Activated CD8-positive, alpha-beta T cell treated with anti-CD3 and anti-CD28 coated beads, Interleukin-2, amount 10 ng/mL, durations not matched to agents 7 days and 5 days (primary cell): ENCODE measurements at regions of chr1 and their contacts with region 1.

Region 1: DNA sequence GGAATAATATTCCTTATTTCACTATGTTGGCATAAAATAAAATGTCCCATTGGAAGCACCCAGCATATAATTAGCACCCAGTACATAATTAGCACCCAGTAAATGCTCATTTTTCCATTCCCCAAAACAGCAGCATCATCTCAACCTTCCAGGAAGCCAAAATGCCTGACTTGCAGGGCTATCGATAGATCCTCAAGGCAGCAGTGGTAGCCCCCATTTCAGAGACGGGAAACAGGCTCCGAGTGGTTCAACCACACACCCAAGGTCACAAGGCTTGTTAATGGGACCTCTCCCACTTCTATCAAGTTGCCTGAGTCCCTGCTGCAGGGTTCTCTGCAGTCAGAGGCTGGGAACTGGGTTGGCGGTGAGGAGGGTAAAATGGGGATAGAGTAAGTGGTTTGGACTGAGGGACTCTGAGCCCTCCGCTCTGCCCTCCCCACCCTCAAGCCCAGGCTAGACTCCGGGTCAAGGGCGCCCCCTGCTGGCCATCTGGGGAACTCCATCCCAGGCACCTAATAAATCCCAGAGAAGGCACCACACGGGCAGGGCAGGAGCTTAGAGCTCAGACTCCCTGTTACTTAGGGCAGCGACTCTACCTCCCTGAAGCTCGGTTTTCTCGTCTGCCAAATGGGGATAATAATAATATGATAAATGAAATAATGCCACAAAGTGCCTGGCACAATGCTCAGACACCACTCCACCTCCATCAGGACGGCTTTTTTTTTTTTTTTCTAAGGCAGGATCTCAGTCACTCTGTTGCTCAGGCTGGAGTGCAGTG is 21.9 kb upstream of the LAPTM5 start:
- DNase-seq: peak; percentile 94
- ATAC-seq: peak; percentile 95
- H3K4me3 Mint-ChIP-seq: no peak overlapping the region
- H3K27ac Mint-ChIP-seq: no peak overlapping the region
- H3K4me1 Mint-ChIP-seq: peaks cover 18% of the 10 kb centered on the region
- H3K27me3 Mint-ChIP-seq: no peaks in the 10 kb centered on the region

Region 2: GRCh38 chr1:30569384-30569783 is 210.1 kb before region 1 on chr1:
- CTCF ChIA-PET with region 1: no interaction called
- POLR2A ChIA-PET with region 1: no interaction called
- DNase-seq: no peak
- ATAC-seq: no peak
- H3K4me3 Mint-ChIP-seq: no peak overlapping the region
- H3K27ac Mint-ChIP-seq: no peak overlapping the region
- H3K4me1 Mint-ChIP-seq: no peaks in the 10 kb centered on the region
- H3K27me3 Mint-ChIP-seq: peaks cover 4% of the 10 kb centered on the region

Region 3: DNA sequence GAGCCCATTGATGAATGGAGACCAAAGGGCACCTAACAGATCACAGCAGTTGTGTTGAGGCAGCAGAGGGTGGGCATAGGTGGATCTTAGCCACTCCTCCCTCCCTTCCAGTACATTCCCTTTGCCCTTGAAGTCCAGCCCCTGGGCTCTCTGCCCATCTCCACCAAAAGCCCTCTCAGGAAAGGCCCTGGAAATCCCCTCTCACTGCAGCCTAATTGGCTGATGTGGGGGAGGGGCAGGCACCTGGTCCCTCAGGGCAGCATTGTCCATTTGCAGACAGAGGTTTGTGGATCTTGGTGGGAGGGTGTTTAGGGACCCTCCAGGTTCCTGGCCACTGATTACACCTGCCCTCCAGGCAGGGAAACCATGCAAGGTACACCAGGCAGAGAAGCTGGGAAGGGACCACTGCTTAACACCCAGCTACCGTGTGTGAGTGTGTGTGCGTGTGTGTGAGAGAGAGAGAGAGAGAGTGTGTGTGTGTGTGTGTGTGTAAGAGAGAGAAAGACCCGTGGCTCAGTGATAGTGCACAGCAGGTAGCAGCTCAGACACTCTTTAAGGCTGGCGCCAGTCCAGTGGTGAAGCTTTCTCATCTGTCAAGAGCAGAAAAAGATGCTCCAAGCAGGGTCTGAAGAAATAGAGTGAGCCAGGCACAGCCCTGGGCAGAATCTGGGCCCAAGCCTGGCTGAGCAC is 127.2 kb before region 1 on chr1:
- CTCF ChIA-PET with region 1: no interaction called
- POLR2A ChIA-PET with region 1: no interaction called
- DNase-seq: no peak
- ATAC-seq: no peak
- H3K4me3 Mint-ChIP-seq: no peak overlapping the region
- H3K27ac Mint-ChIP-seq: no peak overlapping the region
- H3K4me1 Mint-ChIP-seq: no peaks in the 10 kb centered on the region
- H3K27me3 Mint-ChIP-seq: peaks cover 11% of the 10 kb centered on the region

Region 4: DNA sequence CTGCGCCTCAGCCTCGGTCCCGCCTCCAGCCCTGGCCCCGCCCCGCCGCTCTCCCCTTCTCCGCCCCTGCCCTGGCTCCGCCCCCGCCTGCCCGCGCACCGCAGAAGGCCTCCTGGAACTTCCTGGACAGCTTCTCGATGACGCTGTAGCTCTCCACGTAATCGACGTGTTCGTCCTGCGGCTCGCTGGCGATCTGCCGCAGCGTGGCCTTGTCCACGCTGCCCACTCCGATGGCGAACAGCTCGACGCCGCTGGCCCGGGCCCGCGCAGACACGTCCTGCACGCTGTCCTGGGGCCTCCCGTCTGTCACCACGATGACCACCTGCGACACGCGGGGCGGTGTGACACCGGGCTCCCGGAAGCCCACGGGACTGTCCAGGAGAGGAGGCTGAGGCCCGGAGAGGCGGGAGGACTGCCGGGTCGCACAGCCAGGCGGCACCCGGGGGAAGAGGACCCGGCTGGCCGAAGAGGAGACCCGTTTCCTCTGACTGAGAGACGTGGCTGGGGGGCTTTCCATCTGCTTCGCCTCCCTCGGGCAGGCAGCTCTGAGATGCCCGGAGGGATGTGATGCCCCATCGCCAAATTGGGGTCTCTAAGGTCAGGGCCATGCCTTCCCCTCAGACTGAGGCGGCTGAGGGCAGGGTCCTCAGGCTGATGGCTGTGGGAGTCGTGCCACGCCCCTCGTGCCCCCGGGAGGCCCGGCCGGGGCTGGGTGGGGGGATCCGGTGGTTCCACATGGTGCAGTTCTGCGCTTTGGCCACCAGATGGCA is 60.7 kb before region 1 on chr1:
- CTCF ChIA-PET with region 1: interaction called, 532 read pairs
- POLR2A ChIA-PET with region 1: interaction called, 29 read pairs
- DNase-seq: peak; percentile 86
- ATAC-seq: peak; percentile 74
- H3K4me3 Mint-ChIP-seq: peak overlapping the region; percentile 84
- H3K27ac Mint-ChIP-seq: peak overlapping the region; percentile 97
- H3K4me1 Mint-ChIP-seq: peaks cover 24% of the 10 kb centered on the region
- H3K27me3 Mint-ChIP-seq: no peaks in the 10 kb centered on the region

Region 5: DNA sequence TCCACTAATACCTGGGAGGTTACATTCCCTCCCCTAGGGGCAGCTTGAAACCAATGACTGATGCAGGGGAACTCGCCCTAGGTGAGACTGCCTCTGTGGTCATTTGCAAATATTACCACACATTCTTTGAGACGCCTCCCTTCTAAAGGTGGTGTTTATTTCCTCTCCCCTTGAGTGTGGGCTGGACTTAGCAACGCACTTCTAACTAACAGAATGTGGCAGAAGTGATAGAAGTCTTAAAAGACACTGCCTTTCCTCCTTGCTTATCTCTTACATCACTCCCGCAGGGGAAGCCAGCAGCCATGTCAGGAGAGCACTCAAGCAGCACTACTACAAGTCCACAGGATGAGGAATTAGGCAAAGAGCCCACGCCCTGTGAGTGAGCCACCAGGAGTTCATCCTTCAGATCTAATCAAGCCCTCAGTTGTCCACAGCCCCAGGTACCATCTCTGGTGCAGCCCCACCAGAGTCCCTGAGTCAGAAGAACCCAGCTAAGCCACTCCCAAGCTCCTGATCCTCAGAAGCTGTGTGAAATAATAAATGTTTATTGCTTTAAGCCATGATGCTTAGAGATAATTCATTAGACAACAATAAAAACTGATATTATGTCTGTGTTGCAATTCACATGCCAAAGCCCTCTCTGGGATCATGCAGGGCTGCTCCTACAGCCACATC is 41.3 kb before region 1 on chr1:
- CTCF ChIA-PET with region 1: interaction called, 53 read pairs
- POLR2A ChIA-PET with region 1: no interaction called
- DNase-seq: no peak
- ATAC-seq: peak; percentile 14
- H3K4me3 Mint-ChIP-seq: no peak overlapping the region
- H3K27ac Mint-ChIP-seq: peak overlapping the region; percentile 82
- H3K4me1 Mint-ChIP-seq: peaks cover 74% of the 10 kb centered on the region
- H3K27me3 Mint-ChIP-seq: no peaks in the 10 kb centered on the region

Region 6: GRCh38 chr1:30748699-30749401 is 30.6 kb before region 1 on chr1:
- CTCF ChIA-PET with region 1: interaction called, 53 read pairs
- POLR2A ChIA-PET with region 1: interaction called, 3 read pairs
- DNase-seq: peak; percentile 56
- ATAC-seq: peak; percentile 10
- H3K4me3 Mint-ChIP-seq: peak overlapping the region; percentile 65
- H3K27ac Mint-ChIP-seq: peak overlapping the region; percentile 89
- H3K4me1 Mint-ChIP-seq: peaks cover 98% of the 10 kb centered on the region
- H3K27me3 Mint-ChIP-seq: no peaks in the 10 kb centered on the region

Region 7: DNA sequence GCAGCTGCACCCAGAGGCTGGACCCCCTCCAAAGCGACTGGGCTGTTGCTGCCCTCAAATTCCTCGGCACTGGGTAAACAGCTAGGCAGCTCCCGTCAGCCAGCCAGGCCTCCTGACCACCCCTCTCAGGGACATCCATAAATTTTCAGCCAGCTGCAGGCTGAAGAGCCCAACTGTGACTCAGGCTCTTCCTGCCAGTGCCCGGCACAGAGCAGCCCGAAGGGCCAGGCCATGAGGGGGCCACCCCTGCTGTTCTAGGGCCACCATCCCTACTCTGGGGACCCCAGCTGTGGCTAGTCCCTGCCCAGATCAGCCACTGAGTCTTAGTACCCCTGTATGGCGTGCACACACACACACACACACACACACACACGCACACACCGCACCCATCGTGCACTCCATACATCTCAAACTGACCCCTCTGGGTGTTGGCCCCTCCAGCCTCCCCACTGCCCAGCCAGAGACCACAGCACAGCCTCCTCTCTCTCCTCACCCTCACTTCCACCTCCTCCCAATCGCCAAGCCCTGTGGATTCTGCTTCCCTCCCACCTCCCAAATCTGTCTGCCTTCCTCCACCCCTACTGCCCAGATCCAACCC is 15.7 kb before region 1 on chr1:
- CTCF ChIA-PET with region 1: interaction called, 139 read pairs
- POLR2A ChIA-PET with region 1: interaction called, 3 read pairs
- DNase-seq: no peak
- ATAC-seq: no peak
- H3K4me3 Mint-ChIP-seq: no peak overlapping the region
- H3K27ac Mint-ChIP-seq: peak overlapping the region; percentile 39
- H3K4me1 Mint-ChIP-seq: peaks cover 88% of the 10 kb centered on the region
- H3K27me3 Mint-ChIP-seq: no peaks in the 10 kb centered on the region

Region 8: GRCh38 chr1:30790850-30791778 is 11.6 kb after region 1 on chr1:
- CTCF ChIA-PET with region 1: interaction called, 10 read pairs
- POLR2A ChIA-PET with region 1: no interaction called
- DNase-seq: peak; percentile 39
- ATAC-seq: peak; percentile 55
- H3K4me3 Mint-ChIP-seq: no peak overlapping the region
- H3K27ac Mint-ChIP-seq: no peak overlapping the region
- H3K4me1 Mint-ChIP-seq: peaks cover 14% of the 10 kb centered on the region
- H3K27me3 Mint-ChIP-seq: peaks cover 22% of the 10 kb centered on the region

Region 9: DNA sequence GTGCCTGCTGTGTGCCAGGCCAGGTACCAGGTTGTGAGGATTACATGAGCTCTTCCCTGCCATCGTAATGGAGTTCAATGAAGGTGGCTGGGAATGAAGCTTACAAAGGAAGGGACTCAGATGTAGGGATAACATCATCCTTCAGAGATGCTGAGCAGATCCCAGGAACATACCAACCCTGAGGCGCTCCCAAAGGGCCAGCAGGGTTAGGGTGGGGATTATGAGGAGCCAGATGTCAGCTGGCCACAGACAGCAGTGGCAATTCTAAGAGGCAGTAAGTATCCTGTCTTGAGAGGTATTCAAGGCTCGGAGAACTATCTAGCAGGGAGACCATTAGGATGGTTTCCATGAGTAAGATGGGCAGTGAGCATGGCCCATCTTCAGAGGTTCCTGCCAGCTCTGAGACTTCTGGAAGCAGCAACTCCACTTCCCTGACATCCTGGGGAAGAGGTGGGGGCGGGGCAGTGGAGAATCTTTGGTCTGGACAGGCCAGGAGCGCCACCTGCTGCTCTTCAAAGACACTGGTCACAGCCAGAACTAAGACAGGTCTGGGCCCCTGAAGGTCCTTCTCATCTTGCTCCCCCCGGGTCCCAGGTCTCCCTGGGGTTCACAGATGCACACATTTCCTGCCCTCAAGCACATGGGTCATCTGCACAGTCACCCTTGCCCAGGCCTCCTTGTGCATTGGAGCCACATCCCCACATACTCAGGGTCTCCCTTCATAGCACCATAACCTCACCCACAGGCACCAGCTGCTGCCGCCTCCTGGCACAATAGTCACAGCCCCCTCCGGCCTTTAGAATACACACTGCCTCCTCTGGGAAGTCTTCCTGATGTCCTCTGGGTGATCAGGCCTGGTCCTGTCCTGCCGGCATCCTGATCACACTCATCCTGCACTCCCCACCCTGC is 131.8 kb after region 1 on chr1:
- CTCF ChIA-PET with region 1: interaction called, 62 read pairs
- POLR2A ChIA-PET with region 1: no interaction called
- DNase-seq: peak; percentile 67
- ATAC-seq: no peak
- H3K4me3 Mint-ChIP-seq: no peak overlapping the region
- H3K27ac Mint-ChIP-seq: no peak overlapping the region
- H3K4me1 Mint-ChIP-seq: peaks cover 25% of the 10 kb centered on the region
- H3K27me3 Mint-ChIP-seq: peaks cover 29% of the 10 kb centered on the region